A549 (cell line): ENCODE measurements at regions of chr15 and their contacts with region 1.

Region 1: GRCh38 chr15:83066734-83067637 is at the start of gene BTBD1:
- DNase-seq: peak; percentile 95 to 99
- ATAC-seq: peak; percentile 96 to 97
- H3K4me3 ChIP-seq: peak within 1 kb of the TSS; percentile 80
- H3K27ac ChIP-seq: peak within 1 kb of the TSS; percentile 98
- H3K4me1 ChIP-seq: peaks cover 34% of the 10 kb centered on the region
- CTCF ChIP-seq: no peak; the same call in 2 of the 3 replicates
- EP300 ChIP-seq: no peak; a peak in 1 of 5 replicates
- POLR2A ChIP-seq: peak; percentile 97
- RAD21 ChIP-seq: peak in 1 of 2 experiments; percentile 32; a peak in 1 of 5 replicates
- polyA plus RNA-seq, gene BTBD1: 88.8 and 95.8 TPM in 2 replicates

Region 2: GRCh38 chr15:82966671-82967071 is 100.3 kb before region 1 on chr15:
- CTCF ChIA-PET with region 1: no interaction called
- POLR2A ChIA-PET with region 1: no interaction called
- DNase-seq: no peak
- ATAC-seq: no peak
- H3K4me3 ChIP-seq: no peak overlapping the region
- H3K27ac ChIP-seq: no peak overlapping the region
- H3K4me1 ChIP-seq: no peaks in the 10 kb centered on the region
- CTCF ChIP-seq: no peak
- EP300 ChIP-seq: no peak
- POLR2A ChIP-seq: no peak
- RAD21 ChIP-seq: no peak

Region 3: DNA sequence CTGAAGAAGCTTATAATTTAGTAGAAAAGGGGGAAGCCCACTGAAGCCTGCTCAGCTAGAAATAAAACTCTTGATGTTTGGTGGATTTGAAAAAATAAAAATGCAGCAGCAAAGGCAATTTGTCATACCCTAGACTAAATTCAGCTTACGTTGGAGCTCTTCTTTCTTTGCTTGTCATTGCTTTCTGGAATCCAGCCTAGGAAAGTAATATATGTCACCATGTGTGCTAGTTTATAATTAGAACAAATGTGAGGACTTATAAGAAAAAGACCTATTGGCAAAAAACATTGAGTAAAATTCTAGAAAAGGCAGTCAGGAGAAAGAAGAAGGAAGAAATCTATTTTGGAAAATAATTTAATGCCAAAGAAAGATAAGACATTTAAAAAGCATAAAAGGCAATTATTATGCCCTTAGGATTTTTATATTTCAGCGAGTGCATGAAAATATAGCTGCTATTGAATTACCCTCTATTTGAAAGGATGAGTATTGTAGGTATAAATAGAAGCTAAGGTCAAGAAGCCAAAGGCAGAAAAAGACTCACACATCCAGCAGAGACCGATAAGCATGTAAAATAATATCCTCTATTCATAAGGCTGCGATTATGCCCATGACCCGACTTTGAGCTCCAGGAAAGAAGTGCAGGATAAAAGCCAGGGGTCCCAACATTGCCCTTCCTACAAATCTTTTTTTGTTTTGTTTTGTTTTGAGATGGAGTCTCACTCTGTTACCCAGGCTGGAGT is 10.7 kb after region 1 on chr15:
- CTCF ChIA-PET with region 1: no interaction called
- POLR2A ChIA-PET with region 1: interaction called, 14 read pairs
- DNase-seq: no peak
- ATAC-seq: no peak; a peak in 2 of 6 replicates
- H3K4me3 ChIP-seq: no peak overlapping the region
- H3K27ac ChIP-seq: no peak overlapping the region
- H3K4me1 ChIP-seq: no peaks in the 10 kb centered on the region
- CTCF ChIP-seq: no peak
- EP300 ChIP-seq: no peak
- POLR2A ChIP-seq: no peak
- RAD21 ChIP-seq: no peak

Region 4: DNA sequence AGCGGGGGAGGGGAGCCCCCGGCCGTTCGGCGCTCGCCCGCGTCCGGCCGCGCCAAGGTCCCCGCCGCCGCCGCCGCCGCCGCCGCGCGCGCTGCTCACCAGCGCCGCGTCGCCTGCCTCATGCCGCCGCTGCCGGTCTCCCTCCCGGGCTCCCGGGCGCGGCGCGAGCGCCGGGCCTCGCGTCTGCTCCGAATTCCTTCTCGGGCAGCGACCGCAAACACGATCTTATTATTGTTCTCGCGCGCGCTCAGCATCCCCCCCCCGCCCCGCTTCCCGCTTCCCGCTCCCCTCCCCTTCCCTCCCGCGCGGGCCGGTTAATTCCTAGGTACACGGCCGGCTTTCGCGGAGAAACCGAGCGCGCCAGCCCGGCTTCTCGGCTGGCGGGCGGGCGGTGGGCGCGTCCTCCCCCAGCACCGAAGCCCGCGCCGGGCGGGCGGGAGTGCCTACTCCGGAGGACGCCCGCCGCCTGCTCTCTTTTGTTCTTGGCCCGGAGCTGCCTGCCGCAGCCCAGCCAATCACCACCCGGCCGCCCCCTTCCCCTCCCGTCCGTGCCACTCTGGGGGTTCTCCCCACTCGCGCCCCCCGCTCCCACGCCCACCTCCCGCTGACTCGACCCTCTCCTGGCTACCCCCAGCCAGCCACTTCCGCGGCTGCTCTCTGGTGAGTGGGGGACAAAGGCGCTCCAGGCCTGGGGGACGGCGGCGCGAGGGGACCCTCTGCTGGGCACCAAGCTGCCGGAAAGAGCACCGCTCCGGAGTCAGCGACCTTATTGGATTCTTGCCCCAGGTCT is 140.8 kb after region 1 on chr15 and contains the start of gene HDGFL3:
- CTCF ChIA-PET with region 1: interaction called, 4 read pairs
- POLR2A ChIA-PET with region 1: interaction called, 16 read pairs
- DNase-seq: peak; percentile 67 to 74
- ATAC-seq: peak; percentile 68 to 80
- H3K4me3 ChIP-seq: peak within 1 kb of the TSS; percentile 82
- H3K27ac ChIP-seq: peak within 1 kb of the TSS; percentile 96
- H3K4me1 ChIP-seq: peaks cover 19% of the 10 kb centered on the region
- CTCF ChIP-seq: peak; percentile 29; the same call in 2 of the 3 replicates
- EP300 ChIP-seq: no peak
- POLR2A ChIP-seq: peak; percentile 76
- RAD21 ChIP-seq: peak; percentile 30 to 41; a peak in 1 of 5 replicates
- polyA plus RNA-seq, gene HDGFL3: 49.3 and 91.2 TPM in 2 replicates